ENCODE measurements at regions of chr4 and their contacts with region 1.

Region 1: DNA sequence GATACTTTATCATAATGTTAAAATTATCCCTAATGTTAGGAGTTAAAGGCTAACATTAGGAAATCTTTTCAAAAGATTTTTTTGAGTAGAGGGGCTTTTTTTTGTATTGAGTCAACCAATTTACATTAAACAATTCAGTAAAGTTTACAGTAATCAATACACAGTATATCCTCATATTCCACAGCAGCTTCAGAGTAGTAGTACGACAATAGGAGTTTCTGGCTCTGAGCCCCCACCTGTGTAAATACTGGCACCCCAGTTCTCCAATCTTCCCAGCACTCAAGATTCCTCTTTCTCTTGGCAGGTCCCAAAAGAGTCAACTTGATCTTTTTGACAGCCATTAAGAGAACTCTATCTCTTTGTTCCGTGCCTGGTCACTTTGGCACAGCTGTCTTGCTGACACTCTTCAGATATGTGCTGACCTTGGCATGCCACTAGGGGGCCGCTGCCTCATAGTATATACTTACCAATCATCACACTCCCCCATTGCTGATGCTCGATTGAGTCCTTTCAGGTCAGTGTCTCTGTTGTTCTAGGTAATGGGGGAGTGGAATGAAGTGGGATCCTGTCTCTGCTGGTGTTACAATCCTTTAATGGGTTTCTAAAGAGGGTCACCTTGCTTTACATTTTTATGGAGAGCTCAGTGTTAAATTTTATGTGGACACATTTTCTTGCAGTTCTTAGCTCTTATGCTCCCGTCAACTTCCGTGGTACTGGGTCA is 19.5 kb upstream of the CCNI start:
- DNase-seq: peak; percentile 63
- H3K4me3 Mint-ChIP-seq: no peak overlapping the region
- H3K27ac Mint-ChIP-seq: no peak overlapping the region
- H3K4me1 Mint-ChIP-seq: peaks cover 9% of the 10 kb centered on the region
- H3K27me3 Mint-ChIP-seq: no peaks in the 10 kb centered on the region

Region 2: DNA sequence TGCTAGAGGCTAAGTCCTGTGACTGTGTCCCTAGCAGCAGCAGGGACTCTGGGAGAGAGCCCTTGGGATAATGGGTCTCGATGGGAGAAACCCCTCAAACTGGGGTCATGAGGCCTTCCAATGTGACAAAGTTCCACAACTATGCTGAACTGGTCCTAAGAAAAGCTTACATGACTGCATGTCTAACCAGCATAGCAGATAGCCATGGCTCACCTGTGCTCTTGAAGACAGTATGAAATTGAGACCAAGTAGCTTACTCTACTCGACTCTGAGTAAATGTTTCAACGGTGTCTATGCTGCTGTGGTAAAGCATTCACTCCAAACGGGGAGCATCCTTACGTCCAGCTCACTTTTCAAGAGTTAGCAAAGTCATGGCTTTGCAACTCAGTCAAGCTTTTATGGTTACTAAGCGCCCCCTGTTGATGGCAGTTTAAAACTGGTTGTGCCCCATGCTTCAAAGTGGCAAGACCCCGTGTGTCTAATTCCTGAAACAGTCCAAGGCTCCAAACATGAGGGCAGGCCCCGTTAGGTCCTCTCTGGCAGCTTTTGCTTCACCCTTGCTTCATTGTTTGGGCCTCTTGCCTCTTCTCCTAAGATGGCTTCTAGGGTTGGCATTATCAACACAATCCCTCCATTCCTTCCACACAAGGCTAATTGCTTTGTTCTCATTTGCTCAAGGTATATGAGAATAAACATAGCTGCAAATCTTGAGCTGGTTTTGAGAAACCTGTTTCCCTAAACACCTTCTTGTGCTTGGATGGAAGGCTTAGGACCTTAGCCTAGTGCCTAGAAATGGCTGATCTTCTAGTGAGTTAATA is 108.3 kb after region 1 on chr4:
- CTCF ChIA-PET with region 1: interaction called, 35 read pairs
- POLR2A ChIA-PET with region 1: no interaction called
- DNase-seq: peak; percentile 80
- H3K4me3 Mint-ChIP-seq: no peak overlapping the region
- H3K27ac Mint-ChIP-seq: no peak overlapping the region
- H3K4me1 Mint-ChIP-seq: peaks cover 5% of the 10 kb centered on the region
- H3K27me3 Mint-ChIP-seq: peaks cover 9% of the 10 kb centered on the region

Region 3: GRCh38 chr4:77650787-77651186 is 555.5 kb after region 1 on chr4:
- CTCF ChIA-PET with region 1: no interaction called
- POLR2A ChIA-PET with region 1: no interaction called
- DNase-seq: no peak
- H3K4me3 Mint-ChIP-seq: no peak overlapping the region
- H3K27ac Mint-ChIP-seq: no peak overlapping the region
- H3K4me1 Mint-ChIP-seq: no peaks in the 10 kb centered on the region
- H3K27me3 Mint-ChIP-seq: peaks cover 4% of the 10 kb centered on the region